GM13977 (cell line): ENCODE measurements at regions of chr11 and their contacts with region 1.

Region 1: GRCh38 chr11:57800444-57801182 is 39.0 kb downstream of the CTNND1 start:
- DNase-seq: peak; percentile 66
- CTCF ChIP-seq: peak; percentile 75

Region 2: DNA sequence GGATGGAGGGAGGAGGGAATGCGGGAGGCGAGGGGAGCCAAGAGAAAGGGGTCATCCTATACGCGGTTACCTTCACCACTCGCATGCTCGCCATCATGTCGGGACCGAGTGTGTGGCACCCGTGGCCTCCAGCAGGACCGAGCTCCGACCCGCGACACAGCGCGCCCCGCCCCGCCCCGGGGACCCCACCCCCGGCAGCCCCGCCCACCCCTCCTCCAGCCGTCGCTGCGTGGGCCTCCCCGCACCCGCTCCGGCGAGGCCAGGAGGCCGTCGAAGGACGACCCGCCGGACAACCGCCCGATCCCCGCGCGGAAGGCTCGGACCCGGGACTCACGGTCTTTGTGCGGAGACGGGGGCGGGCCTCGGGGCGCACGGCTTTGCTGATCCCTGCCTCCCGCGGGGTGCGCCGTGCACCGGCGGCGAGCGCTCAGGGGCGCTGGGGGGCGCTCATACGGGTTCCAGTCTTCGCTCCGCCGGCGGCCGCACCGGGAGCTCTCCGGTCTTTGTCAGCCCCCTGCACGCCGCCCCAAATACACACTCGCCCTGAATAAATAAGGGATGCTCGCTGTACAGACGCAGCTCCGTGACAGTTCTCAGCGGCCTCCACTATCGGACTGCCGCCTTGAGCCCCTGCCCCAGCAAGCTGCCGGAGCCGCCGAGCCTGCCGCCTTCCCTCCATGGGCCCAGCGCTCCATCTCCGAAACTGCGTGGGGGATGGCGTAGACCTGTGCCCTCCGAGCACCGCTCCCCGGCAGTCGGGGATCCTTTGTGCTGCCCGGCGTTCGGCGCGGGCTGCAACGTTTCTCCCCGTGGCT is 232.9 kb before region 1 on chr11 and contains the start of gene UBE2L6:
- in situ Hi-C with region 1: loop called (anchors 25 kb)
- DNase-seq: peak; percentile 87
- CTCF ChIP-seq: peak; percentile 74

Region 3: DNA sequence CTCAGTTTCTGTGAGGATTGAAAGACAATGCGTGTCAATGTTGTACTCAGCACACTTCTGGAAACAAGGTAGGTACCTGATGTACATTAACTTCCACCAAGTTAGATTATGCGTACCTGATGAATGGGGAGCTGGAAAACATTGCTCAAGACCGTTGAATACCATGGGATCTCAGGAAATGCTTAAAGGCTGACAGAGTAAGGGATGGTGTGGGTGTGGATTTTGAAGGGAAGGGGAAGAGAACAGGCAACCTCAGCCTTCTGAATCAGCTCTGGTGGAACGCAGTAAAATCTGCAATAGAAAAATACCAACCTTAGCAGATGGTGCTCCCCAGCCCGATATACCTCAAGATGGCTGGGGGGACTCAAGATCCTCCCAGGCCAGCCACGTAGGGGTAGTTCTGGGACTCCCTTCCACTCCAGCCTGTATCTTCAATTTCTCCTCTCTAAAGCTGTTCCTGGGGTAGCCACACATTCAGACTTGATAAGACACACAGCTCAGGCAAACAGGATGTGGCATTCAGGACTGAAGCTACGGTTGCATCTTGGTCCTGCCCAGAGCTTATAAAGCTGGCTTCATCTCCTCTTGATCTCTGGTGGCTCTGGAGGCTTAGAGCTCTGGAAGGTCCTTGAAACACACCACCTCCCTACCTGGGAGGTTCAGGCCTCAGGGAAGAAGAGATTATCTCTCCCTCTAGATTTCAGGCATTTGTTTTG is 72.7 kb after region 1 on chr11:
- in situ Hi-C with region 1: no loop called
- DNase-seq: no peak
- CTCF ChIP-seq: no peak

Region 4: GRCh38 chr11:58524232-58525036 is 723.8 kb after region 1 on chr11:
- in situ Hi-C with region 1: loop called (anchors 25 kb)
- DNase-seq: peak; percentile 42
- CTCF ChIP-seq: peak; percentile 77